Prostate gland (tissue), 2 donors: ENCODE measurements at regions of chr3 and their contacts with region 1.

Region 1: GRCh38 chr3:109731620-109732473 is 394.5 kb upstream of the DPPA4 start:
- DNase-seq: peak; percentile 53
- H3K4me3 ChIP-seq: no peak overlapping the region
- H3K27ac ChIP-seq: no peak overlapping the region
- H3K4me1 ChIP-seq: no peaks in the 10 kb centered on the region
- H3K27me3 ChIP-seq: no peaks in the 10 kb centered on the region
- CTCF ChIP-seq: peak; percentile 64 to 85 (median 82)
- POLR2A ChIP-seq: no peak

Region 2: DNA sequence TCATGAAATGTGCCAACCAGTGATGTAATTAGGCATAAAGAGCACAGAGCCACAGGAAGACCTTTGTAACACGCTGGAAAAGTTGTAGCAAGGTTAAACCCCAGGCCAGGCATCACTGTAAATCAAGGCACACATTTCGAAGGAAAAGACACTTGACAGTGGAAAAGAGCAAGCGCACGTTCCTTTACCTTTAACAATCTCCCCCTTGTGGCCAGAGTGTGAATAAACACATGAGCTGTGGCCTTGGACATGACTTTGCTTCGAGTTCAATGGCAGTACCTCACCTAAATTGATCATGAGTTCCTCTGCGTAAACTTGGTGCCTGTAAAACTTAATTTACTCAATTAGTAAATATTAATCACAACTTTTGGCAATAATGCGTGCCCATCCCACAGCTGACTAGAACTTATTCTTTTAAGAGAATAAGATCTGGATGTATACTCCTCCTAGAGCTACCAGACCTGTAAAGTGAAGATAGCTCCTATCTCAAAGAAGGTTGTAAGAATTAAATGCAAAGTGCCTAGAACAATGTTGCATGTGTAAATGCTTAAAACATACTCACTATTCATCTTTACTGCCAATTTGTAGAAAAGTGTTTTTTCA is 582.8 kb after region 1 on chr3:
- intact Hi-C with region 1: loop called (anchors 5 kb)
- DNase-seq: peak; percentile 42
- H3K4me3 ChIP-seq: no peak overlapping the region
- H3K27ac ChIP-seq: no peak overlapping the region
- H3K4me1 ChIP-seq: no peaks in the 10 kb centered on the region
- H3K27me3 ChIP-seq: no peaks in the 10 kb centered on the region
- CTCF ChIP-seq: peak; percentile 55 to 83 (median 58)
- POLR2A ChIP-seq: no peak

Region 3: GRCh38 chr3:111080413-111080812 is 1348.6 kb after region 1 on chr3:
- intact Hi-C with region 1: loop called (anchors 10 kb)
- DNase-seq: no peak
- H3K4me3 ChIP-seq: no peak overlapping the region
- H3K27ac ChIP-seq: no peak overlapping the region
- H3K4me1 ChIP-seq: no peaks in the 10 kb centered on the region
- H3K27me3 ChIP-seq: no peaks in the 10 kb centered on the region
- CTCF ChIP-seq: peak in 3 of 4 experiments; percentile 18 to 46 (median 32)
- POLR2A ChIP-seq: no peak

Region 4: DNA sequence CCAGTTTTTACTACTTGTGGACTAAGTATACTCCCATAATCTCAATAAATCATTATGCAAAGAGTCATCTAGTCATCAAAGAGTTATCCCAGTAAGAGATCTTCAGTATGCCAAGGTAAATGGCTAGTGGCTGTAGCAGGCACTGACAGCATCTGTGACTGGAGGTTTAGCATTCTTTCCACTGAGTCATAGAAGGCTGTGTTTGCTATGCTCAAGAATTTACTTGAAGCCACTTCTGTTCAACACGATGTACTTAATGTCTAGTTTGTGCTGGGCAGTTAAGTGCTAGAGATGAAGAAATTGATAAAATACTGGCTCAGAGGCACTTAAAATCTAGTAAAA is 1850.2 kb after region 1 on chr3:
- intact Hi-C with region 1: no loop called
- DNase-seq: no peak
- H3K4me3 ChIP-seq: no peak overlapping the region
- H3K27ac ChIP-seq: no peak overlapping the region
- H3K4me1 ChIP-seq: no peaks in the 10 kb centered on the region
- H3K27me3 ChIP-seq: no peaks in the 10 kb centered on the region
- CTCF ChIP-seq: no peak
- POLR2A ChIP-seq: no peak